Activated naive CD4-positive, alpha-beta T cell treated with anti-CD3 and anti-CD28 coated beads for 36 hours (primary cell): ENCODE measurements at regions of chr2 and their contacts with region 1.

Region 1: DNA sequence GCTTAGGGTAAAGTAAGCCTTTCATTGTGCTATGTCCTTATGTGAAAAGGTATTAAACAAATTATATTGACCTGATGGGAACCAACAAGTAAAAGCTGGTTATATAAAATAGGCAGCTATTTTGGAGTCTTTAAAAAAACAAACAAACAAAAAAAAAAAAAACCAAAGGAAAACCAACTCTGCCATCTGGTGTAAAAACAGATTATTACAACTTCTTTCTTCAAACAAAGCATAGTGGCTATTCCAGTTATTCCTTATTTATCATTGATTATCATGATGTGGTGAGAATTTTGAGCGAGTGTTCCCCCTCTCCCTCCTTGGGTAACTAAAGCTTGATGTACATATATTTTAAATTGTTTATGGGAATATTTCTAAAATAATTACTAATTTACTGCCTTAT is 122.4 kb upstream of the FHL2 start:
- DNase-seq: no peak
- H3K4me3 Mint-ChIP-seq: no peak overlapping the region
- H3K27ac Mint-ChIP-seq: no peak overlapping the region
- H3K4me1 Mint-ChIP-seq: no peaks in the 10 kb centered on the region
- H3K27me3 Mint-ChIP-seq: no peaks in the 10 kb centered on the region

Region 2: GRCh38 chr2:105055613-105056012 is 465.6 kb before region 1 on chr2:
- CTCF ChIA-PET with region 1: no interaction called
- intact Hi-C with region 1: no loop called
- DNase-seq: no peak
- H3K4me3 Mint-ChIP-seq: no peak overlapping the region
- H3K27ac Mint-ChIP-seq: no peak overlapping the region
- H3K4me1 Mint-ChIP-seq: peaks cover 10% of the 10 kb centered on the region
- H3K27me3 Mint-ChIP-seq: no peaks in the 10 kb centered on the region

Region 3: GRCh38 chr2:105287692-105288091 is 233.5 kb before region 1 on chr2:
- CTCF ChIA-PET with region 1: interaction called, 4 read pairs
- intact Hi-C with region 1: loop called (anchors 2 kb)
- DNase-seq: peak; percentile 67
- H3K4me3 Mint-ChIP-seq: no peak overlapping the region
- H3K27ac Mint-ChIP-seq: no peak overlapping the region
- H3K4me1 Mint-ChIP-seq: peaks cover 1% of the 10 kb centered on the region
- H3K27me3 Mint-ChIP-seq: no peaks in the 10 kb centered on the region

Region 4: DNA sequence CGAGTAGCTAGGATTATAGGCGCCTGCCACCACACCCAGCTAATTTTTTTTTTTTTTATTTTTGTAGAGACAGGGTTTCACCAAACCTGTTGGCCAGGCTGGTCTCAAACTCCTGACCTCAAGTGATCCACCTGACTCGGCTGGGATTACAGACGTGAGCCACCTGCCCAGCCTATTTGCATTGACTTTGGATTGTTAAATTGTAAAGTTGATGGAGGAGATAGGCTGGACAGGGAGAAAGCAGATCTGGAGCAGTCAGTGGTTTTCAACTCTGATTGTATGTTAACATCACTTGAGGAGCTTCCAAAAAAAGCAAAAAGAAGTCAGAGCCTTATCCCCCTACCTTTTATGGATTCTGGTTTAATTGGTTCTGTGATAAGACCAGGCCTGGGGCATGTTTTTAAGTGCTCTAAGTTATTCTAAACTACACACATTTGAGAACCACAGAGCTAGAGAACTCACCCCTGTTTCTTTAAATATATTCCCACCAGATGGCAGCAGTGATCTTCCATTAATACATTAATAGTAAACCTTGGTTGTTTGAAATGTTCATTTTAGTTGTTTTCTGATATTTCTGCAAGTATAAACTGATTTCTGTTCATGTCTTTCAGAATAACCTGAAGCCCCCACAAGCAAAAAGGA is 176.4 kb before region 1 on chr2:
- CTCF ChIA-PET with region 1: interaction called, 8 read pairs
- intact Hi-C with region 1: loop called (anchors 1 kb)
- DNase-seq: no peak
- H3K4me3 Mint-ChIP-seq: no peak overlapping the region
- H3K27ac Mint-ChIP-seq: no peak overlapping the region
- H3K4me1 Mint-ChIP-seq: peaks cover 4% of the 10 kb centered on the region
- H3K27me3 Mint-ChIP-seq: no peaks in the 10 kb centered on the region

Region 5: DNA sequence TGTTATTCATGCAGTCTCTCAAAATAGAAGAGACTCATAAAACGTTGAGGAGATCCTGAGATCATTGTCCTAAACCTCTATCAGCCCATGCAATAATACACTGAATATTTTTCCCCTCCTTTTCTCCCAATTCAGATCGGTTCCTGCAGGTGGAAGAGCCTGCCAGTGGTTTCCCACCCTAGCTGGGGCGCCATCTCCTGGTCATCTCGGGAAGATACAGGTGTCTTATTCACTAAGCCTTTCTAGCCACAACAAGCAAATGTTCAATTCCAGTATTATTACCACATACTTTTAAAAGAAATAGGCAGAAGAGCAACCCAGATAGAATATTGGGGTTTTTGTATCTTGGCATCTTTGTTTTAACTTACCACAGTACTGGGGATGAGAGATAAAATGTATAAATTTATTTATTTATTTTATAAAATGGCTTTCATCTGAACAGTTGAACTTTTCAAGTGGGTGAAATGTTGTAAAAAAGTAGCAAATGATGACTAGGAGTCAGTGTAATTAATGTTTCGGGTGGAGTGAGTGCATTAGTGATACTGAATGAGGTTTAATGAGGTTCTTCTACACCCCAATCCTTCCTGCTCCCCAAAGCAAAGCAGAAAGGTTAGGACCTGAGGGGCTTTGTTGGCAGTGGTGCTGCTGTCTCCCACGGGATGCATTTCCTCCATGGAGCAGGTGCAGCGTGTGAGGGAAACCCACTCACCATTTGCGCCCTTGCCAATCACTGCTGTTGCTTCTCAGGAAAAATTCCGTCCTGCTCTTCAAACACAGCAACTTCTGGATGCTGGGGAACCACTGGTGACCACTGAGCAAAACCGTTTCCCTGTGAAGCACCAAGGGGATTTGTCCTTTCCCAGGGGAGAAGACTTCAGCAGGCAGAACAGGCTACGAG is 24.8 kb after region 1 on chr2:
- CTCF ChIA-PET with region 1: interaction called, 5 read pairs
- intact Hi-C with region 1: loop called (anchors 2 kb)
- DNase-seq: peak; percentile 86
- H3K4me3 Mint-ChIP-seq: peak overlapping the region; percentile 39
- H3K27ac Mint-ChIP-seq: no peak overlapping the region
- H3K4me1 Mint-ChIP-seq: peaks cover 9% of the 10 kb centered on the region
- H3K27me3 Mint-ChIP-seq: no peaks in the 10 kb centered on the region